PC-9 (cell line): ENCODE measurements at regions of chr20 and their contacts with region 1.

Region 1: DNA sequence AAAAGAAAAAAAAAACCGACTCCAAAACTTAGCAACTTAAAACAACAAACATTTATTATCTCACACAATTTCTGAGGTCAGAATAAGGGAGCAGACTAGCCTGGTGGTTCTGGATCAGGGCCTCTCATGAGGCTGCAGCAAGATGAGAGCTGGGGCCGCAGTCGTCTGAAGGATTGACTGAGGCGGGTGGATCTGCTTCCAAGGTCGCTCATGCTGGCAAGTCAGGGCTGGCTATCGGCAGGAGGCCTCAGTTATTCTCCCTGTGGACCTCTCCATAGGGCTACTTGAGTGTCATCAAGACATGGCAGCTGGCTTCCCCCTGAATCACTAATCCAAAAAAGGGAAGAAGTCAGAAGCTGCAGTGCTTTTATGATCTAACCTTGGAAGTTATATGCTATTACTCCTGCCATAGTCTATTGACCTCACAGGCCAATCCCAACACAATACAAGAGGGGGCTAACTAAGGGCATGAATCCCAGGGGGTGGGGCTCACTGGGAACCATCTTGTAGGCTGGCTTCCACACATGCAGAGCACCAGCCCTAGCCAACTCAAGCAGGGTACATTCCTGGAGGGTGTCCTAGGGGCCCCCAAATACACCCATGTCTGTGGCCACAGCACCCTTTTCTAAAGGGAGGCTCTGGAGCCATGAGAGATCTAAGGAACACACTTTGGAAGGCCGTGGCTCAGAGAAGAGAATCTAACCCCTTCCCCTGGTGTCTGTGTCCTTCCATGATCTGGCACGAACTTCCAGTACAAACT is 11.3 kb downstream of the EBF4 start:
- DNase-seq: no peak
- H3K4me3 ChIP-seq: no peak overlapping the region
- H3K27ac ChIP-seq: no peak overlapping the region
- H3K4me1 ChIP-seq: no peaks in the 10 kb centered on the region
- H3K27me3 ChIP-seq: peaks cover 93% of the 10 kb centered on the region
- CTCF ChIP-seq: no peak

Region 2: GRCh38 chr20:2465100-2465499 is 238.8 kb before region 1 on chr20:
- CTCF ChIA-PET with region 1: interaction called, 10 read pairs
- POLR2A ChIA-PET with region 1: no interaction called
- intact Hi-C with region 1: no loop called
- DNase-seq: no peak
- H3K4me3 ChIP-seq: no peak overlapping the region
- H3K27ac ChIP-seq: no peak overlapping the region
- H3K4me1 ChIP-seq: peaks cover 15% of the 10 kb centered on the region; the same call in 1 of the 2 replicates
- H3K27me3 ChIP-seq: no peaks in the 10 kb centered on the region
- CTCF ChIP-seq: no peak

Region 3: DNA sequence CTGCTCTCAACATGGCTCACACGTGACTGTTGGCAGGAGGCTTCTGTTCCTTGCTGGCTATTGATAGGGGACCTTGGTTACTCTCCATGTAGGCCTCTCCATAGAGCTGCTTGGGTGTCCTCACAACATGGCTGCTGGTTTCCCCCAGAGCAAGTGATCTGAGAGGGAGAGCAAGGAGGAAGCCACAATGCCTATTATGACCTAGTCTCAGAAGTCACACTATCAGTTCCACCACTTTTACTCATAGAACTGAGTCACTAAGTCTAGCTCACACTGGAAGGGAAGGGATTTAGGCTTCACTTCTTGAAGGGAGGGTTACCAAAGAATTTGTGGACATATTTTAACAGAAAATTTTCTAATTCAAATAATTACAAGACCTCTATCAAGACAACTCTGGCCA is 60.2 kb before region 1 on chr20:
- CTCF ChIA-PET with region 1: no interaction called
- POLR2A ChIA-PET with region 1: interaction called, 17 read pairs
- intact Hi-C with region 1: no loop called
- DNase-seq: no peak
- H3K4me3 ChIP-seq: no peak overlapping the region
- H3K27ac ChIP-seq: no peak overlapping the region
- H3K4me1 ChIP-seq: no peaks in the 10 kb centered on the region
- H3K27me3 ChIP-seq: no peaks in the 10 kb centered on the region
- CTCF ChIP-seq: no peak